Thyroid gland (tissue), 4 donors: ENCODE measurements at regions of chr17 and their contacts with region 1.

Region 1: GRCh38 chr17:82320956-82321927 is 3.8 kb upstream of the CD7 start:
- DNase-seq: no peak
- H3K4me3 ChIP-seq: no peak overlapping the region
- H3K27ac ChIP-seq: no peak overlapping the region
- H3K4me1 ChIP-seq: peaks cover 0 to 5% of the 10 kb centered on the region in 2 donors
- H3K27me3 ChIP-seq: no peaks in the 10 kb centered on the region
- CTCF ChIP-seq: peak; percentile 54 to 93 (median 84)
- POLR2A ChIP-seq: no peak

Region 2: GRCh38 chr17:82030470-82031302 is 290.6 kb before region 1 on chr17:
- intact Hi-C with region 1: loop called (anchors 5 kb)
- DNase-seq: peak; percentile 83 to 85
- H3K4me3 ChIP-seq: peak overlapping the region in 1 of 3 donors; percentile 36
- H3K27ac ChIP-seq: peak overlapping the region in 1 of 3 donors; percentile 41
- H3K4me1 ChIP-seq: peaks cover 28 to 39% of the 10 kb centered on the region in 2 donors
- H3K27me3 ChIP-seq: no peaks in the 10 kb centered on the region
- CTCF ChIP-seq: peak; percentile 75 to 98 (median 94)
- POLR2A ChIP-seq: no peak

Region 3: DNA sequence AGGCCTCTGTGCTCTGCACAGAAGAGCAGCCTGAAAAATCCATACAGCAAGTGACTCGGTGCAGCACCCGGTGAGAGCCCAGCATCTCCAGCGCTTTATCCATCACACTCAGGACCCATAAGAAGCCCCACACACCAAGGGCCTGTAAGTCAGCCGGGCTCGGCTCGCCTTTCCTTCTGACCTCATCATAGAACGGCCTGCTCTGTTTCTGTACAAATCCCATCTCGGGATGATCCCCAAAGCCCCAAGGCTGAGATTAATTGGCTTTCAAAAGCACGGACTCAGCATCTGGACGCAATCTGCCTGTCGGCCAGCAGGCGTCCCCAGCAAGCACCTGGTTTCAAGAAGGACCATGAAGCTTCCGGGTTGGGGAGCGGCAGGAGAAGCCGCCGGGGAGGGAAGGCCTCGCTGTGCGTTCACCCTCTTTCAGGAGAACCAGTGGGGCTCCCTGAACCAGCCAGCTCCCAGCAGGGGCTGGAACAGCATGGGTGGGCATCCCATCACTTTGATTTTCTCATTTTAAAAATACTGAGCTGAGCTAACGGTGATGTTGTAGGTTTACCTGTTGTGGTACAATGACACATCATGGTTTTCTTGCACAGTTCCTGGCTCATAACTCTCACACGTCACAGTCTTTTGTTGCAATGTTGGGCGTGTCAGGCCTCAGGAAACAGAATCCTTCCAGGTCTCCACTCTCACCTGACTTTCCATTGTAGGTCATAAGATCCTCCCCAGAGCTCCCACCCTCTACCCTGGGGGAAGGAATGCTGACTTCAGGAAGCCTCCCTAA is 115.3 kb before region 1 on chr17:
- intact Hi-C with region 1: loop called (anchors 2 kb)
- DNase-seq: peak; percentile 85 to 88
- H3K4me3 ChIP-seq: no peak overlapping the region
- H3K27ac ChIP-seq: peak overlapping the region; percentile 67 to 86 (median 85)
- H3K4me1 ChIP-seq: peaks cover 4 to 11% of the 10 kb centered on the region in 2 donors
- H3K27me3 ChIP-seq: no peaks in the 10 kb centered on the region
- CTCF ChIP-seq: peak; percentile 69 to 95 (median 92)
- POLR2A ChIP-seq: peak in 1 of 2 donors; percentile 42

Region 4: DNA sequence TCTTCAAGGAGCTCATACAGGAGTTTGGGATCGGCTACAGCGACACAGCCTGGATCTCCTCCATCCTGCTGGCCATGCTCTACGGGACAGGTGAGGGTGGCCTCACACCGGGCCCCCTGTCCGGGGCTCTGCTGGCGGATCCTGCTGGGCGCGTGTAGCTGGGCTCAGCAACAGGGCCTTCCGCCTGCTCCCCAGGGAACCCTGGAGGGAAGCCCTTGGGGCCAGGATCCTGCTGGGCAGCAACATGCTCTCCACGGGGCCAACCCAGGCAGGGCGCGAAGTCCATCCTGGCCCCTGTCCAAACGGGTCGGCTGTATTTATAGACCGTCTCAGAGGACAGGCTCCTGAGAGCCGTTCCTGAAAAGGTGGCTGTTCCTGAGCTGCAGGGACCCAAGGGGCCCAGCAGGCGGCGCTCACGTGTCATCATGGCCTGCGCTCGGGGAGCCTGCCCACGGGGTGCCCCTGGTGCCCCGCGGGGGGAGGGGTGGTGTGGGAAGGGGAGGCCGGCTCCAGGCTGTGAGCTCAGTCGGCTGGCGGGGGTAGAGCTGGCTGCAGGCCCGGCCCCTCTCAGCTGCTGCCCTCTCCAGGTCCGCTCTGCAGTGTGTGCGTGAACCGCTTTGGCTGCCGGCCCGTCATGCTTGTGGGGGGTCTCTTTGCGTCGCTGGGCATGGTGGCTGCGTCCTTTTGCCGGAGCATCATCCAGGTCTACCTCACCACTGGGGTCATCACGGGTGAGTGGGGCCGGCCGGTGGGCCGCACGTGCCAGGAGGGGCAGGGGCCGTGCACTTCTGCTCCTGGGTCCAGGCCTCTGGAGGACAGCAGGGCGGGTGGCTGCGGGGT is 84.9 kb before region 1 on chr17:
- intact Hi-C with region 1: loop called (anchors 5 kb)
- DNase-seq: peak; percentile 93 to 96
- H3K4me3 ChIP-seq: no peak overlapping the region
- H3K27ac ChIP-seq: peak overlapping the region; percentile 70 to 88 (median 77)
- H3K4me1 ChIP-seq: peaks cover 95 to 100% of the 10 kb centered on the region in 2 donors
- H3K27me3 ChIP-seq: no peaks in the 10 kb centered on the region
- CTCF ChIP-seq: peak; percentile 89 to 97 (median 94)
- POLR2A ChIP-seq: no peak